MCF 10A (cell line): ENCODE measurements at regions of chr20 and their contacts with region 1.

Region 1: GRCh38 chr20:52847029-52847660 is 125.0 kb upstream of the TSHZ2 start:
- DNase-seq: peak; percentile 60
- H3K4me3 Mint-ChIP-seq: no peak overlapping the region
- H3K27ac Mint-ChIP-seq: peak overlapping the region; percentile 8
- H3K4me1 Mint-ChIP-seq: peaks cover 11% of the 10 kb centered on the region
- H3K27me3 Mint-ChIP-seq: no peaks in the 10 kb centered on the region
- CTCF ChIP-seq: no peak

Region 2: DNA sequence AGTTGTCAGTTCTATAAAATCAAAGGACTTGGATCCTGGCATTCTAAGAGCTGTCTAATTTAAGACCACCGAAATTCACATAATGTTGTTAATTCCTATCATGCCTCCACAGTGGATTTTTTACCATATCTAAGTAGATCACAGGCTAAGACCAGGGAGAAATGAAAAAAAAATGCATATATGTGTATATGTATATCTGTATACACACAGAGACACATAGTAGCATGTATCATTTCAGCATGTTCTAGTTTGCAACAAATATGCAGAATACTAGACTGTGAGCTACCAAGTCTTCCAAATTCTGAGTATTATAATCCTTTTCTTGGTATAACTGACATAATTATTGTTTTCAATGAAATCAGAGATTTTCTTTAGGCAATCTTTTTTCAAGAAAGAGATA is 142.6 kb before region 1 on chr20:
- CTCF ChIA-PET with region 1: no interaction called
- POLR2A ChIA-PET with region 1: no interaction called
- intact Hi-C with region 1: no loop called
- DNase-seq: no peak
- H3K4me3 Mint-ChIP-seq: no peak overlapping the region
- H3K27ac Mint-ChIP-seq: no peak overlapping the region
- H3K4me1 Mint-ChIP-seq: no peaks in the 10 kb centered on the region
- H3K27me3 Mint-ChIP-seq: peaks cover 13% of the 10 kb centered on the region
- CTCF ChIP-seq: no peak

Region 3: GRCh38 chr20:52859156-52859876 is 12.2 kb after region 1 on chr20:
- CTCF ChIA-PET with region 1: interaction called, 14 read pairs
- POLR2A ChIA-PET with region 1: interaction called, 3 read pairs
- intact Hi-C with region 1: no loop called
- DNase-seq: peak; percentile 43
- H3K4me3 Mint-ChIP-seq: no peak overlapping the region
- H3K27ac Mint-ChIP-seq: no peak overlapping the region
- H3K4me1 Mint-ChIP-seq: peaks cover 6% of the 10 kb centered on the region
- H3K27me3 Mint-ChIP-seq: no peaks in the 10 kb centered on the region
- CTCF ChIP-seq: no peak

Region 4: DNA sequence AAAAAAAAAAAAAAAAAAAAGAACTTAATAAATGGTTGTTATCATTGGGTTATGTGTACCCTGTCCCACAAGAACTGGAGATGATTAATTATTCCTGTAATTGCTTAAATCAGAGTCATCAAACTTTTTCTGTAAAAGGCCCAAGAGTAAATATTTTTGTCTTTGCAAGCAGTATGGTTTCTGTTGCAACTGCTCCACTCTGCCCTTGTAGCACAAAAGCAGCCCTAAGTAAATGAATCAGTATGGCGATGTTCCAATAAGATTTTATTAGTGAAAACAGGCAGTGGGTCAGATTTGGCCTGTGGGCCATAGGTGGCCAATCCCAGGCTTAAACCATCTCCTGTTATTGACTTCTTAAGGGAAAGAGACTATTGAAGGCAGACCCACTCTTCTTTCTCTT is 377.7 kb after region 1 on chr20:
- CTCF ChIA-PET with region 1: no interaction called
- POLR2A ChIA-PET with region 1: no interaction called
- intact Hi-C with region 1: loop called (anchors 1 kb)
- DNase-seq: no peak
- H3K4me3 Mint-ChIP-seq: no peak overlapping the region
- H3K27ac Mint-ChIP-seq: no peak overlapping the region
- H3K4me1 Mint-ChIP-seq: peaks cover 11% of the 10 kb centered on the region
- H3K27me3 Mint-ChIP-seq: no peaks in the 10 kb centered on the region
- CTCF ChIP-seq: no peak